Naive thymus-derived CD4-positive, alpha-beta T cell (primary cell): ENCODE measurements at regions of chr6 and their contacts with region 1.

Region 1: GRCh38 chr6:99588618-99589289 is 17.9 kb upstream of the PRDM13 start:
- DNase-seq: peak; percentile 33 to 67 (median 59)
- ATAC-seq: peak; percentile 89
- H3K4me3 ChIP-seq: peak overlapping the region; percentile 68
- H3K4me3 Mint-ChIP-seq: peak overlapping the region; percentile 84 to 92 (median 88)
- H3K27ac ChIP-seq: no peak overlapping the region
- H3K27ac Mint-ChIP-seq: peak overlapping the region in 2 of 9 donors; percentile 43 to 45
- H3K4me1 ChIP-seq: peaks cover 8 to 14% of the 10 kb centered on the region in 2 donors
- H3K4me1 Mint-ChIP-seq: peaks cover 16 to 35% (median 26%) of the 10 kb centered on the region in 7 donors
- H3K27me3 ChIP-seq: peaks cover 14 to 19% of the 10 kb centered on the region in 2 donors
- H3K27me3 Mint-ChIP-seq: peaks cover 59 to 84% (median 66%) of the 10 kb centered on the region in 5 donors

Region 2: GRCh38 chr6:99603421-99604165 is 14.8 kb after region 1 on chr6:
- CTCF ChIA-PET with region 1: no interaction called
- POLR2A ChIA-PET with region 1: no interaction called
- intact Hi-C with region 1: loop called (anchors 1 to 2 kb)
- DNase-seq: peak in 1 of 9 donors; percentile 48
- ATAC-seq: peak; percentile 35
- H3K4me3 ChIP-seq: peak overlapping the region; percentile 40
- H3K4me3 Mint-ChIP-seq: peak overlapping the region; percentile 35 to 75 (median 70)
- H3K27ac ChIP-seq: no peak overlapping the region
- H3K27ac Mint-ChIP-seq: no peak overlapping the region
- H3K4me1 ChIP-seq: peaks cover 18 to 28% of the 10 kb centered on the region in 2 donors
- H3K4me1 Mint-ChIP-seq: peaks cover 18 to 44% (median 27%) of the 10 kb centered on the region in 7 donors
- H3K27me3 ChIP-seq: peaks cover 45 to 47% of the 10 kb centered on the region in 2 donors
- H3K27me3 Mint-ChIP-seq: peaks cover 83 to 94% (median 85%) of the 10 kb centered on the region in 5 donors

Region 3: DNA sequence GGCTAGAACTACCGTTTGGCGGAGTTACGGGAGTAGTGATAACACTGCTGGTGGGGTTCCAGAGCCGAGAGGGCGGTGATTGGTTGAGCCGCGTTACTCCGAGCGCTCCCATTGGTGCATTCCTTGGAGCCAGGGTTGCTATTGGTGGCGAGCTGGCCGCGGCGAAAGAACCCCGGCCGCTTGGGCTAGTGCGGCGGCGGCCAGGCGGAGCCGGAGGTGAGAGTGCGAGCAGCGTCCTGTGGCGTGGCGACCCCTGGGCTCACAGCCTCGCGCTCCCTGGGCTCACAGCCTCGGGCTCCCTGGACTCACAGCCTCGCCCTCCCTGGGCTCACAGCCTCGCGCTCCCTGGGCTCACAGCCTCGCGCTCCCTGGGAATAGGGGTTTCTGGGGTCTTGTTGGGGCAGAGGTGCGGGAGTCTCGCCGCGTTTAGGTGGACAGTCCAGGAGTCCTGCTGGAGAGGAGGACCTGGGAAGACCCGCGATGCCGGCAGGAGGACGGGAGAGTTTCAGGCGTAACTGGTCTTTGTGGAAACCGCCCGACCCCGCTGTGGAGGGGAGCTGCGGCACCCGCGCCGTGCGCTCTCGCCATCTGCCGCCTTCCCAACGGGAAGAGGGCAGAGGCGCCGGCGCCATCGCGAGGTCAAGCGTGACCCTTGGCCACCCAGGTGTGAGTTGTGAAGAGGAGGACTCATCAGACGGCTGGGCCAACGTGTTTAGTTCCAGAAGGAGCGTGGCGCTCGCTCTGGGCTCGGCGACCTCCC is 30.1 kb after region 1 on chr6:
- CTCF ChIA-PET with region 1: no interaction called
- POLR2A ChIA-PET with region 1: no interaction called
- intact Hi-C with region 1: loop called in 1 of 2 experiments (anchors 5 kb)
- DNase-seq: no peak
- ATAC-seq: no peak
- H3K4me3 ChIP-seq: no peak overlapping the region
- H3K4me3 Mint-ChIP-seq: no peak overlapping the region
- H3K27ac ChIP-seq: no peak overlapping the region
- H3K27ac Mint-ChIP-seq: no peak overlapping the region
- H3K4me1 ChIP-seq: peaks cover 10 to 13% of the 10 kb centered on the region in 2 donors
- H3K4me1 Mint-ChIP-seq: peaks cover 8 to 10% (median 10%) of the 10 kb centered on the region in 7 donors
- H3K27me3 ChIP-seq: peaks cover 33 to 55% of the 10 kb centered on the region in 2 donors
- H3K27me3 Mint-ChIP-seq: peaks cover 81 to 89% (median 86%) of the 10 kb centered on the region in 5 donors

Region 4: GRCh38 chr6:99746261-99746895 is 157.6 kb after region 1 on chr6:
- CTCF ChIA-PET with region 1: interaction called, 3 read pairs
- POLR2A ChIA-PET with region 1: no interaction called
- intact Hi-C with region 1: loop called (anchors 1 kb)
- DNase-seq: peak in 8 of 9 donors; percentile 31 to 63 (median 48)
- ATAC-seq: peak; percentile 86
- H3K4me3 ChIP-seq: no peak overlapping the region
- H3K4me3 Mint-ChIP-seq: no peak overlapping the region
- H3K27ac ChIP-seq: no peak overlapping the region
- H3K27ac Mint-ChIP-seq: no peak overlapping the region
- H3K4me1 ChIP-seq: no peaks in the 10 kb centered on the region
- H3K4me1 Mint-ChIP-seq: no peaks in the 10 kb centered on the region
- H3K27me3 ChIP-seq: no peaks in the 10 kb centered on the region
- H3K27me3 Mint-ChIP-seq: peaks cover 20 to 43% (median 33%) of the 10 kb centered on the region in 5 donors

Region 5: DNA sequence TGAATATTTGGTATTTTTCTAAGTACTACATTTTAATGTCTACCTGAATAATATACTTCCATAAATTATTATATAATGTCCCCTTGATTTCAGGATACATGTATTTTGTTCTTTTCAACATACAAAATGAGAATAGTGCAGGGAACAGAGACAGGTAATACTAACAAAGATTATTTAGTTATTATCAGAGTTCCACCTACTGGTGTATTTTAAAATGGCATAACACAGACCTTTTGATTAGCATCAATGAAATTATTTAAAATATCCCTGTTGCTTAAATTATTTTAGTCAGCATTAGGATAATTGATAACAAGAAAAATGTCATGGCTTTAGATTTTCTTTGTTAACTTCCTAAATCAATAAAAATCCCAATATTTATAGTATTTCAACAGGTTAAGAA is 201.9 kb after region 1 on chr6:
- CTCF ChIA-PET with region 1: no interaction called
- POLR2A ChIA-PET with region 1: no interaction called
- intact Hi-C with region 1: loop called in 1 of 2 experiments (anchors 1 kb)
- DNase-seq: no peak
- ATAC-seq: no peak
- H3K4me3 ChIP-seq: no peak overlapping the region
- H3K4me3 Mint-ChIP-seq: no peak overlapping the region
- H3K27ac ChIP-seq: no peak overlapping the region
- H3K27ac Mint-ChIP-seq: no peak overlapping the region
- H3K4me1 ChIP-seq: no peaks in the 10 kb centered on the region
- H3K4me1 Mint-ChIP-seq: no peaks in the 10 kb centered on the region
- H3K27me3 ChIP-seq: no peaks in the 10 kb centered on the region
- H3K27me3 Mint-ChIP-seq: peaks cover 18 to 57% (median 29%) of the 10 kb centered on the region in 5 donors